ENCODE measurements at regions of chr17 and their contacts with region 1.

Region 1: DNA sequence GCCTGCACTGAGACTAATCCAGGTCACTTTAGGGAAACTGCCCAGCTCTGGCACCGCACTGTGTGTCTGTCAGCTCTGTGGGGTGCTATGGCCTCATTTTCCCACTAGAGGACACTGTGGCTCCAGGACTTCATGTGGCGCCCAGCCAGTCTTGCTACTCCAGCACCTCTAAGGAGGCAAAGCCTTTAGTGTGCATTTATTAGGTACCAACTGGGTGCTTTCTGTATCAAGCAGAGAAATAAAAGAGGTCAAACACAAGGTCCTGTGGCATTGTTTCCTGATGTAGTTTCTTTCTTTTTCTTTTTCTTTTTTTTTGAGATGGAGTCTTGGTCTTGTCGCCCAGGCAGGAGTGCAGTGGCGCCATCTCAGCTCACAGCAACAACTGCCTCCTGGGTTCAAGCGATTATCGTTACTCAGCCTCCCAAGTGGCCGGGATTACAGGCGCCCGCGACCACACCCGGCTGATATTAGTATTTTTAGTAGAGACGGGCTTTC is 12.5 kb upstream of the RHBDL3 start:
- DNase-seq: peak; percentile 58
- ATAC-seq: peak; percentile 99
- H3K4me3 Mint-ChIP-seq: no peak overlapping the region
- H3K27ac Mint-ChIP-seq: no peak overlapping the region
- H3K4me1 Mint-ChIP-seq: peaks cover 4% of the 10 kb centered on the region
- H3K27me3 Mint-ChIP-seq: peaks cover 10% of the 10 kb centered on the region
- CTCF ChIP-seq: peak; percentile 32

Region 2: DNA sequence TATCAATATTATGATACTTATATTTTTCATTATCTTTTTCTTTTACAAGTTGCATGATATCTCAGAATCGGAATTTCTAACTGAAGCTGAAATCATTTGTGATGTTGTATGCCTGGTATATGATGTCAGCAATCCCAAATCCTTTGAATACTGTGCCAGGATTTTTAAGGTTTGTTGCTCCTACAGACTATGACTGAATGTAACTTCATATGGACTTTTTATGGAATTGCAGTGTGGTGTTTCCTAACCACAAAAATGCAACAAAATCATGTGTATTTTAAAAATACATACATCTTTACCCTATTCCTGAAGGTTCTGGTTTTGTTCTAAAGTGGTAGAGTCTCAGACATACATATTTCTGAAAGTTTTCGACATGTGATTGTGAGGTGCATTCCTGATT is 46.3 kb before region 1 on chr17:
- CTCF ChIA-PET with region 1: no interaction called
- POLR2A ChIA-PET with region 1: no interaction called
- intact Hi-C with region 1: loop called (anchors 1 kb)
- DNase-seq: no peak
- ATAC-seq: no peak
- H3K4me3 Mint-ChIP-seq: no peak overlapping the region
- H3K27ac Mint-ChIP-seq: no peak overlapping the region
- H3K4me1 Mint-ChIP-seq: no peaks in the 10 kb centered on the region
- H3K27me3 Mint-ChIP-seq: no peaks in the 10 kb centered on the region
- CTCF ChIP-seq: no peak

Region 3: DNA sequence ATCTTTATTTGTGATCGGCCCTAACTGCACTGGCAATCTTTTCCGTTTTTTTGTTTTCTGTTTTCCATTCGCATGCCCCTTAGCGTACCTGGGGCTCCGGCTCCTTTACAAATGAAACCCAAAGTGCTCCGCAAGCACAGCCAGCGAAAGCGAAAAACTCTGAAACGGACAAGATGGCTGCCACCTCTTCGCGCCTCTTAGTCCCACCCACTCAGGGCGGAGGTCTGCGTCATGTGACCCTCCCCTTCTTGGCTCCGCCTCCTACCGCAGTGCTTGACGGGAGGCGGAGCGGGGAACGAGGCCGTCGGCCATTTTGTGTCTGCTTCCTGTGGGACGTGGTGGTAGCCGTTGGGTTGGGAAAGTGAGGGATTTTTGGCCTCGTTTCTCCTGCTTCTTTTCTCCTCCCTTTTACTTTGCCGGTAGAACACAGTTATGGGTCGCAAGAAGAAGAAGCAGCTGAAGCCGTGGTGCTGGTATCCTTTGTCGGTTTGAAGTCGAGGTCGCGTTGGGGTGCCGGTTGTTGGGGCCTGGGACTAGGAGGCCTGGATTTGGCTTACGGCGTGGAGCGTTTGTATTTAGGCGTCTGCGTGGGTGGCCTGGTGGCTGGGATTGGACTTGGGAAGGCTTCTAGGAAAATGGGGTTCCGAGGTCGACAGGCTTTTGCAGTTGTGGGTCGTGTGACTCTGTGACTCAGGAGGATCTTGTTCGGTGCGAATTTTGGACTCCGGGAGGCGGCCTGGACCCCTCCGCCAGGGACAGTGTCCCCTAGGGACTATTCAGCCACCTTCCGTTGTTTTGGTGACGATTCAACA is 96.9 kb after region 1 on chr17 and contains the start of gene ZNF207:
- CTCF ChIA-PET with region 1: interaction called, 5 read pairs
- POLR2A ChIA-PET with region 1: interaction called, 3 read pairs
- intact Hi-C with region 1: loop called (anchors 1 kb)
- DNase-seq: peak; percentile 89
- ATAC-seq: peak; percentile 98
- H3K4me3 Mint-ChIP-seq: peak within 1 kb of the TSS; percentile 98
- H3K27ac Mint-ChIP-seq: peak within 1 kb of the TSS; percentile 99
- H3K4me1 Mint-ChIP-seq: peaks cover 40% of the 10 kb centered on the region
- H3K27me3 Mint-ChIP-seq: no peaks in the 10 kb centered on the region
- CTCF ChIP-seq: no peak
- total RNA-seq, gene ZNF207: 231 and 276 TPM in 2 replicates

Region 4: GRCh38 chr17:32444308-32445073 is 191.3 kb after region 1 on chr17 and contains the start of gene PSMD11:
- CTCF ChIA-PET with region 1: interaction called, 4 read pairs
- POLR2A ChIA-PET with region 1: no interaction called
- intact Hi-C with region 1: loop called (anchors 1 kb)
- DNase-seq: peak; percentile 99
- ATAC-seq: peak; percentile 97
- H3K4me3 Mint-ChIP-seq: peak within 1 kb of the TSS; percentile 89
- H3K27ac Mint-ChIP-seq: peak within 1 kb of the TSS; percentile 65
- H3K4me1 Mint-ChIP-seq: peaks cover 28% of the 10 kb centered on the region
- H3K27me3 Mint-ChIP-seq: no peaks in the 10 kb centered on the region
- CTCF ChIP-seq: no peak
- total RNA-seq, gene PSMD11: 115 and 117 TPM in 2 replicates

Region 5: DNA sequence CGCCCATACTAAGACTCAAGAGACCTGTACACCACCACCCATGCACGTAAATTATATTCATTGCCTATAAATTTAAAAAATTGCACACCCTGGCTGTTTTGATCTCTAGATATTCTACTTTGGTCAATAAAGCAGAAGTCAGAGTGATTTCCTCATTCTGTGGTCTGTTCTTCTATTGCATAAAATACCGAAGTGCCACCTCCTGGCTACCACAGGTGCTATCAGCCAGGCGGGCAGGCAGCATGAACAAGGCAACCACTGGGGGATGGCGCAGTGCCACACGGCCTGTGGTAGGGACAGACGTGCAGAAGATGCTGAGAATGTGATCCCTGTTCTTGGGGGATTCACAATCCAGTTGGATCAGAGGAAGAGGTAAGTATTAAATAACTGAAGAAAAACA is 355.9 kb after region 1 on chr17:
- CTCF ChIA-PET with region 1: no interaction called
- POLR2A ChIA-PET with region 1: no interaction called
- intact Hi-C with region 1: loop called (anchors 1 kb)
- DNase-seq: peak; percentile 52
- ATAC-seq: peak; percentile 100
- H3K4me3 Mint-ChIP-seq: no peak overlapping the region
- H3K27ac Mint-ChIP-seq: no peak overlapping the region
- H3K4me1 Mint-ChIP-seq: peaks cover 8% of the 10 kb centered on the region
- H3K27me3 Mint-ChIP-seq: no peaks in the 10 kb centered on the region
- CTCF ChIP-seq: no peak